Endothelial cell of umbilical vein (primary cell): ENCODE measurements at regions of chr13 and their contacts with region 1.

Region 1: GRCh38 chr13:64234255-64234654 is 2818.6 kb upstream of the PCDH20 start:
- DNase-seq: peak; percentile 93
- H3K4me3 ChIP-seq: no peak overlapping the region
- H3K27ac ChIP-seq: peak overlapping the region; percentile 61
- H3K4me1 ChIP-seq: peaks cover 14% of the 10 kb centered on the region
- H3K27me3 ChIP-seq: no peaks in the 10 kb centered on the region
- CTCF ChIP-seq: no peak
- POLR2A ChIP-seq: no peak

Region 2: DNA sequence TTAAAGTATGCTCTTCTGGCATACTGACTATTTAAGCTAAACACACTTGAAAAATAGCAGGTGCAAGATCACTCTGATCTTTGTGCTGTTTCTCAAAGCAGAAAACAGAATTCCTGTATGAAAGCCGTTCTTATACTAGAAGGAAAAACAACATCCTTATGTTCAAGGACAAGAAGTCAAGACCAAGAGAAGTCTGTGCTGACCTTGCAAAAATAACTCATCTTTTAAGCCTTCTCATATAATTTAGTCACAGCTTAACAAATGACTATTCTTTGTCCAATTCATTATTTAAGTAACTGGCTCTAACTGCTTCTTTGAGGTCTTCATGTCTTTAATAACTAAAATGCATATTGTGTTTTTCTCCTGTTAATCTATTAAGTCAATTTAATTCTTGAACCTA is 68.4 kb before region 1 on chr13:
- CTCF ChIA-PET with region 1: no interaction called
- POLR2A ChIA-PET with region 1: no interaction called
- dilution Hi-C with region 1: no loop called
- intact Hi-C with region 1: no loop called
- DNase-seq: no peak
- H3K4me3 ChIP-seq: no peak overlapping the region
- H3K27ac ChIP-seq: no peak overlapping the region
- H3K4me1 ChIP-seq: no peaks in the 10 kb centered on the region
- H3K27me3 ChIP-seq: no peaks in the 10 kb centered on the region
- CTCF ChIP-seq: no peak
- POLR2A ChIP-seq: no peak

Region 3: GRCh38 chr13:64278493-64278892 is 44.2 kb after region 1 on chr13:
- CTCF ChIA-PET with region 1: no interaction called
- POLR2A ChIA-PET with region 1: no interaction called
- dilution Hi-C with region 1: no loop called
- intact Hi-C with region 1: loop called (anchors 2 kb)
- DNase-seq: peak; percentile 67
- H3K4me3 ChIP-seq: no peak overlapping the region
- H3K27ac ChIP-seq: no peak overlapping the region
- H3K4me1 ChIP-seq: no peaks in the 10 kb centered on the region
- H3K27me3 ChIP-seq: no peaks in the 10 kb centered on the region
- CTCF ChIP-seq: no peak
- POLR2A ChIP-seq: no peak

Region 4: GRCh38 chr13:64293922-64294321 is 59.7 kb after region 1 on chr13:
- CTCF ChIA-PET with region 1: no interaction called
- POLR2A ChIA-PET with region 1: no interaction called
- dilution Hi-C with region 1: no loop called
- intact Hi-C with region 1: loop called (anchors 5 kb)
- DNase-seq: no peak
- H3K4me3 ChIP-seq: no peak overlapping the region
- H3K27ac ChIP-seq: no peak overlapping the region
- H3K4me1 ChIP-seq: no peaks in the 10 kb centered on the region
- H3K27me3 ChIP-seq: no peaks in the 10 kb centered on the region
- CTCF ChIP-seq: no peak
- POLR2A ChIP-seq: no peak

Region 5: DNA sequence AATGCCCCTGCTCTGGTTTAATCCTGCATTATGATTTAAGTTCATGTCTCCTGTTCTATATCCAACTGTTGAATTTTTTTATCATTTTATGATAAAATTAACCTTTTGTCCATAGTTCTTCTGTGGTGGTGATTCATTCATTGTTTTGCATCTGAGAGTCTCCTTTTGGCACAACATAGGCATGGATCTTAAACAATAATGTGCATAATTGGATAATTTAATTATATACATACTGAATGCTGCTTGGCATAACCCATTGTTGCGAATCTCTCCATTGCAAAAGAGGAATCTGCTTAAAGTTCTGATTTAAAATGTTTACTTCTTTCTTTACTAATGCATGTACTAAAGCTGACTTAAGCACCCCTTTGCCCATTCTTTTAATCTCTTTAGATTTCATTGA is 207.5 kb after region 1 on chr13:
- CTCF ChIA-PET with region 1: no interaction called
- POLR2A ChIA-PET with region 1: no interaction called
- dilution Hi-C with region 1: no loop called
- intact Hi-C with region 1: no loop called
- DNase-seq: peak; percentile 28
- H3K4me3 ChIP-seq: no peak overlapping the region
- H3K27ac ChIP-seq: no peak overlapping the region
- H3K4me1 ChIP-seq: no peaks in the 10 kb centered on the region
- H3K27me3 ChIP-seq: no peaks in the 10 kb centered on the region
- CTCF ChIP-seq: no peak
- POLR2A ChIP-seq: no peak

Region 6: DNA sequence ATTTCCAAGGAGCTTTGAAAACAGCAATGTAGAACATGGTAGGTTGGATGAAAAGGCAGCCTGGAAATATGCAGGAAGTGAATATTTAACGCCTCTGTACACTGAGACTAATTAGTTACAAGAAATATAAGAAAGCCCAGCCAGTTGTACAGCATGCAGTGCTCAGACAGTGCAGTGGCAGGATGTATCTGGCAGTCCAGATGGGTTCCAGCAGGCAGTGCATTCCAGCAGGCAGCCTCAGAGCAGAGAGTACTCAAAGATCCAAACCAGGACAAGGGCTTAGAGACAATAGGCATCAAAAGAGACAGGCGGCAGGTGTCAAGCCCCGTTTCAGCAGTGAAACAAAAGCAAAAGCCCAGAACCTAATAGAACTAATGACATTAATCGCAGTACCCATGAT is 219.6 kb after region 1 on chr13:
- CTCF ChIA-PET with region 1: no interaction called
- POLR2A ChIA-PET with region 1: no interaction called
- dilution Hi-C with region 1: no loop called
- intact Hi-C with region 1: loop called (anchors 5 kb)
- DNase-seq: peak; percentile 7
- H3K4me3 ChIP-seq: no peak overlapping the region
- H3K27ac ChIP-seq: no peak overlapping the region
- H3K4me1 ChIP-seq: no peaks in the 10 kb centered on the region
- H3K27me3 ChIP-seq: no peaks in the 10 kb centered on the region
- CTCF ChIP-seq: no peak
- POLR2A ChIP-seq: no peak